ENCODE measurements at regions of chr20 and their contacts with region 1.

Region 1: GRCh38 chr20:32789896-32790750 is 27.9 kb downstream of the DNMT3B start:
- DNase-seq: peak; percentile 70 to 71
- ATAC-seq: peak; percentile 77 to 92 (median 87)
- H3K4me3 ChIP-seq: no peak overlapping the region
- H3K27ac ChIP-seq: no peak overlapping the region
- H3K4me1 ChIP-seq: peaks cover 0 to 21% (median 10%) of the 10 kb centered on the region in 9 donors
- H3K27me3 ChIP-seq: no peaks in the 10 kb centered on the region
- CTCF ChIP-seq: peak; percentile 96 to 99 (median 98)

Region 2: GRCh38 chr20:32772046-32772445 is 18.1 kb before region 1 on chr20:
- intact Hi-C with region 1: no loop called
- DNase-seq: no peak
- ATAC-seq: no peak
- H3K4me3 ChIP-seq: no peak overlapping the region
- H3K27ac ChIP-seq: no peak overlapping the region
- H3K4me1 ChIP-seq: peaks cover 0 to 16% (median 4%) of the 10 kb centered on the region in 9 donors
- H3K27me3 ChIP-seq: no peaks in the 10 kb centered on the region
- CTCF ChIP-seq: no peak

Region 3: DNA sequence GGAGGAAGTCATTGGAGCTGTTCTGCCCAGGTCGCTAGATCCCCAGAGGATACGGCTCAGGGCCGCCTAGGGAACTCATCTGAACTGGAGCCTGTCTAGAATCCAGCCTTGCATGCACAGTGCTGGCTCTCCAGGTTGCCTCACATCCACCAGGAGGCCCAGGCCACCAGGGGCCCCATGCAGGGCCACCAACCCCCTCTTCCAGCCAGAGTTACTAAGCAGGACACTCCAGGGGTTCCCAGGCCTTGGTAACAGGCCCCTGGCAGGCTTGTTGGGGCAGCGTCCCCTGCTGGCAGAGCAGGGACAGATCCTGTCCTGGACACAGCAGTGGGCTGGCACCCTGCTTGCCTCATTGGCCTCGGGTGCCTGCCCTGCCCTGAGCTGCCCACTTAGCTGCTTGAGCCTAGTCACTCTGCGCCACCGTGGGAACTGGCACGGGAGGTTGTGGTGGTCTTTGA is 103.9 kb after region 1 on chr20:
- intact Hi-C with region 1: loop called in 4 of 10 experiments (anchors 5 to 10 kb)
- DNase-seq: peak in 1 of 2 donors; percentile 22
- ATAC-seq: peak in 6 of 8 donors; percentile 16 to 64 (median 44)
- H3K4me3 ChIP-seq: no peak overlapping the region
- H3K27ac ChIP-seq: no peak overlapping the region
- H3K4me1 ChIP-seq: no peaks in the 10 kb centered on the region
- H3K27me3 ChIP-seq: no peaks in the 10 kb centered on the region
- CTCF ChIP-seq: peak in 7 of 9 donors; percentile 25 to 48 (median 40)

Region 4: DNA sequence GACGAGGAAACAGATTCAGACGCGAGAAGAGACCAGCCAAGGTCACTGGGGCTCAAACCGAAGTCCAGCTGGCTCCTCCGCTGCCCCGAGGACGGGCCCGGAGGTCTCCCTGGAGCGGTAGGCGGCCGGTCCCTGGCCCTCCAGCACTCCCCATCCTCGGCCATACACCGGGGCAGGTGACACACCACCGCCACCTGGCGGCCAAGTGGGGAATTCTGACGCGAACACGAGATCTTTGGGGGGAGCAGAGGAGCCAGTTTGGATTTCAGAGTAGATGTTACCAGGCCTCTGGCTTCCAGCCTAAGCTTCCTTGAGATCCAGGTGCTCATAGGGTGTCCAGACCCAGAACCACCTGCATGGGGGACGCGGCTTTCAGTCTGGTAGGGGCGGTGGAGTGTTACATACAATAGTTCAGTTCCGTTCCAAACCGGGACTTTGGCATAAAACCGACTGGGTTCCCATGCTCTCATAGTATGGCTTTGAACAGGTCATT is 509.0 kb after region 1 on chr20:
- intact Hi-C with region 1: loop called in 6 of 10 experiments (anchors 5 to 10 kb)
- DNase-seq: peak; percentile 44 to 68
- ATAC-seq: peak in 7 of 8 donors; percentile 42 to 76 (median 66)
- H3K4me3 ChIP-seq: no peak overlapping the region
- H3K27ac ChIP-seq: no peak overlapping the region
- H3K4me1 ChIP-seq: peaks cover 0 to 5% (median 0%) of the 10 kb centered on the region in 9 donors
- H3K27me3 ChIP-seq: peaks cover 0 to 24% (median 8%) of the 10 kb centered on the region in 7 donors
- CTCF ChIP-seq: peak; percentile 75 to 96 (median 87)